Sigmoid colon (tissue), 7 donors: ENCODE measurements at regions of chr7 and their contacts with region 1.

Region 1: GRCh38 chr7:131654668-131655326 is 98.4 kb upstream of the PODXL start:
- DNase-seq: peak; percentile 89
- H3K4me3 ChIP-seq: no peak overlapping the region
- H3K27ac ChIP-seq: no peak overlapping the region
- H3K4me1 ChIP-seq: peaks cover 0 to 1% (median under 1%) of the 10 kb centered on the region in 4 donors
- H3K27me3 ChIP-seq: no peaks in the 10 kb centered on the region
- CTCF ChIP-seq: peak; percentile 83 to 97 (median 90)
- EP300 ChIP-seq: no peak
- POLR2A ChIP-seq: no peak

Region 2: GRCh38 chr7:131471605-131472004 is 183.2 kb before region 1 on chr7:
- intact Hi-C with region 1: no loop called
- DNase-seq: no peak
- H3K4me3 ChIP-seq: no peak overlapping the region
- H3K27ac ChIP-seq: no peak overlapping the region
- H3K4me1 ChIP-seq: no peaks in the 10 kb centered on the region
- H3K27me3 ChIP-seq: no peaks in the 10 kb centered on the region
- CTCF ChIP-seq: no peak
- EP300 ChIP-seq: no peak
- POLR2A ChIP-seq: no peak

Region 3: GRCh38 chr7:131507592-131508331 is 147.0 kb before region 1 on chr7:
- intact Hi-C with region 1: loop called (anchors 1 kb)
- DNase-seq: peak; percentile 92
- H3K4me3 ChIP-seq: no peak overlapping the region
- H3K27ac ChIP-seq: no peak overlapping the region
- H3K4me1 ChIP-seq: peaks cover 0 to 27% (median 18%) of the 10 kb centered on the region in 4 donors
- H3K27me3 ChIP-seq: no peaks in the 10 kb centered on the region
- CTCF ChIP-seq: peak; percentile 79 to 91 (median 88)
- EP300 ChIP-seq: no peak
- POLR2A ChIP-seq: no peak

Region 4: GRCh38 chr7:131544449-131545301 is 110.1 kb before region 1 on chr7:
- intact Hi-C with region 1: loop called (anchors 1 kb)
- DNase-seq: peak; percentile 71
- H3K4me3 ChIP-seq: no peak overlapping the region
- H3K27ac ChIP-seq: peak overlapping the region; percentile 21 to 87 (median 54)
- H3K4me1 ChIP-seq: peaks cover 3 to 64% (median 36%) of the 10 kb centered on the region in 4 donors
- H3K27me3 ChIP-seq: no peaks in the 10 kb centered on the region
- CTCF ChIP-seq: no peak
- EP300 ChIP-seq: no peak
- POLR2A ChIP-seq: no peak

Region 5: GRCh38 chr7:131556052-131556908 is 98.5 kb before region 1 on chr7 and contains the start of gene PODXL:
- intact Hi-C with region 1: loop called (anchors 5 kb)
- DNase-seq: peak; percentile 85
- H3K4me3 ChIP-seq: peak within 1 kb of the TSS; percentile 65 to 81 (median 70)
- H3K27ac ChIP-seq: peak within 1 kb of the TSS; percentile 67 to 82 (median 77)
- H3K4me1 ChIP-seq: peaks cover 0 to 57% (median 35%) of the 10 kb centered on the region in 4 donors
- H3K27me3 ChIP-seq: no peaks in the 10 kb centered on the region
- CTCF ChIP-seq: no peak
- EP300 ChIP-seq: no peak
- POLR2A ChIP-seq: no peak
- total RNA-seq, gene PODXL: 15.8 to 23.2 (median 20.2) TPM

Region 6: DNA sequence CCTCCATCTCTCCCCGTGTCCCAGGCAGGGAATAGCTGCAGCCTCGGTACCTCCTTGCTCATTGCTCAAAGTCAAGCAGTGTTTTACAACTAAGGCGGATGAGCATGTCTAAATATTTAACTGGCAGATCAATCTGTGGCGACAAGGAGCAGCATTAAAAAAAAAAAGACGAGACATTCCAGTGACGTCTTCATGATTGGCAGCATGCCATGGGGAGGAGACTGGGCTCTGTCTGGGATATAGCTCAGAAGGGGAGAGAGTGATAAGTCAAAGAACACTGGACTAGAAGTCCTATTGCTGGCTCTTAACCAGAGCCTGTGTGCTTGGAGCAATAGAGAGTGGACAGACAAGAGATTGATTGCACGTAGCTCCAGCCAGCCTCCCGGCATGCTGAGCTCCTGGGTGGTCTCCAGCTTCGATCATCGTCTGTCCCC is 189.1 kb after region 1 on chr7:
- intact Hi-C with region 1: no loop called
- DNase-seq: peak; percentile 77
- H3K4me3 ChIP-seq: no peak overlapping the region
- H3K27ac ChIP-seq: peak overlapping the region in 1 of 4 donors; percentile 18
- H3K4me1 ChIP-seq: peaks cover 0 to 21% (median 11%) of the 10 kb centered on the region in 4 donors
- H3K27me3 ChIP-seq: no peaks in the 10 kb centered on the region
- CTCF ChIP-seq: no peak
- EP300 ChIP-seq: peak in 1 of 4 donors; percentile 24
- POLR2A ChIP-seq: no peak